ENCODE measurements at regions of chr12 and their contacts with region 1.

Region 1: GRCh38 chr12:120292661-120293531 is at the start of gene RNU4-1:
- DNase-seq: peak; percentile 54 to 94 (median 61)
- ATAC-seq: peak; percentile 76
- H3K4me3 ChIP-seq: peak within 1 kb of the TSS; percentile 44
- H3K27ac ChIP-seq: peak within 1 kb of the TSS; percentile 100
- H3K4me1 ChIP-seq: peaks cover 8 to 18% of the 10 kb centered on the region in 2 experiments; a peak in 4 of 5 replicates
- H3K27me3 ChIP-seq: no peaks in the 10 kb centered on the region
- CTCF ChIP-seq: no peak
- EP300 ChIP-seq: peak; percentile 62
- POLR2A ChIP-seq: peak; percentile 100
- RAD21 ChIP-seq: no peak
- polyA plus RNA-seq, gene RNU4-1: not detected

Region 2: GRCh38 chr12:120194534-120195395 is 98.1 kb before region 1 on chr12 and contains the start of gene GCN1:
- CTCF ChIA-PET with region 1: no interaction called
- POLR2A ChIA-PET with region 1: interaction called, 217 read pairs
- in situ Hi-C with region 1: no loop called
- intact Hi-C with region 1: no loop called
- DNase-seq: peak; percentile 85 to 88 (median 86)
- ATAC-seq: peak; percentile 79
- H3K4me3 ChIP-seq: peak within 1 kb of the TSS; percentile 98
- H3K27ac ChIP-seq: peak within 1 kb of the TSS; percentile 96
- H3K4me1 ChIP-seq: peaks cover 12 to 38% of the 10 kb centered on the region in 2 experiments; a peak in 4 of 5 replicates
- H3K27me3 ChIP-seq: no peaks in the 10 kb centered on the region
- CTCF ChIP-seq: no peak
- EP300 ChIP-seq: no peak
- POLR2A ChIP-seq: peak; percentile 77
- RAD21 ChIP-seq: no peak
- polyA plus RNA-seq, gene GCN1: 11.9 to 18.2 TPM

Region 3: DNA sequence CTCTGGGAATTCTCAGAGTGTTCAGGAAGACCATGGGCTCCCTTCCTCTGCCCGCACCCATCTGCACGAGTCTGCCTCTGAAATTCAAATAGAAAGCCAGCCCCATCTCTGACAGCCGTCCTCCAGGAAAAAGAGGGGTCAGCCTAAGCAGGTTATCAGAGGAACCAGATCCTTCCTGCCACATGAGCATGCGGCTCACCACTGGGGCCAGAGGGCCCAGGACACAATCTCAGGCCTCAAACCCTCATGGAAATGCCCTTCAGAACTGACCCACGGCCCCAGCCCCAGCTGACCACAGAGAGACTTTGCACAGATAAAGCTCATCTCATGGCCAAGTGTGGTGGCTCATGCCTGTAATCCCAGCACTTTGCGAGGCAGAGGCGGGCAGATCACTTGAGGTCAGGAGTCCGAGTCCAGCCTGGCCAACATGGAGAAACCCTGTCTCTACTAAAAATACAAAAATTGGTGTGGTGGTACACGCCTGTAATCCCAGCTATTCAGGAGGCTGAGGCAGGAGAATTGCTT is 50.6 kb before region 1 on chr12:
- CTCF ChIA-PET with region 1: no interaction called
- POLR2A ChIA-PET with region 1: interaction called, 98 read pairs
- in situ Hi-C with region 1: no loop called
- intact Hi-C with region 1: no loop called
- DNase-seq: peak; percentile 76 to 95 (median 86)
- ATAC-seq: peak; percentile 97
- H3K4me3 ChIP-seq: no peak overlapping the region
- H3K27ac ChIP-seq: no peak overlapping the region
- H3K4me1 ChIP-seq: peaks cover 30 to 31% of the 10 kb centered on the region in 2 experiments
- H3K27me3 ChIP-seq: no peaks in the 10 kb centered on the region
- CTCF ChIP-seq: no peak
- EP300 ChIP-seq: peak; percentile 85
- POLR2A ChIP-seq: no peak
- RAD21 ChIP-seq: peak in 1 of 2 experiments; percentile 37; a peak in 2 of 4 replicates

Region 4: GRCh38 chr12:120276734-120277133 is 16.2 kb before region 1 on chr12:
- CTCF ChIA-PET with region 1: no interaction called
- POLR2A ChIA-PET with region 1: interaction called, 102 read pairs
- in situ Hi-C with region 1: no loop called
- intact Hi-C with region 1: no loop called
- DNase-seq: no peak
- ATAC-seq: no peak
- H3K4me3 ChIP-seq: no peak overlapping the region
- H3K27ac ChIP-seq: no peak overlapping the region
- H3K4me1 ChIP-seq: peaks cover 0 to 16% of the 10 kb centered on the region in 2 experiments; a peak in 2 of 5 replicates
- H3K27me3 ChIP-seq: no peaks in the 10 kb centered on the region
- CTCF ChIP-seq: no peak
- EP300 ChIP-seq: no peak
- POLR2A ChIP-seq: no peak
- RAD21 ChIP-seq: no peak

Region 5: DNA sequence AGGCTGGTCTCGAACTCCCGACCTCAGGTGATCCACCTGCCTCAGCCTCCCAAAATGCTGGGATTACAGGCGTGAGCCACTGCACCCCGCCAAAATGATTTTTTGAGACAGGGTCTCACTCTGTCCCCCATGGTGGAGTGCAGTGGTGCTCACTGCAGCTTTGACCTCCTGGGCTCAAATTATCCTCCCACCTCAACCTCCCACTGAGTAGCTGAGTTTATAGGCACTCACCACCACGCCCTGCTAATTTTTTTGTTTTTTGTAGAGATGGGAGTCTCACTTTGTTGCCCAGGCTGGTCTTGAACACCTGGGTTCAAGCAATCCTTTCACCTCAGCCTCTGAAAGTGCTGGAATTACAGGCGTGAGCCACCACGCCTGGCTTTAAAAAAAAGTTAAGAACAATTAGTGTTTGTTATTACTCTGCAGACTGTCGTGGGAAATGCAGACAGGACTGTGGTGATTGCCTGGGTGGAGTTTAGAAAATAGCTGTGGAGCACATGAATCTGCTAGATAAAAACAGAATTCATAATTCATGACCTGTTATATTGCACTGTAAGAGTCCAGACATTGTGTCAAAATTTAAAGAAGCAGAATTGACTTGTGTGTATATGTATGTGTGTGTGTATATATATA is 135.8 kb after region 1 on chr12:
- CTCF ChIA-PET with region 1: no interaction called
- POLR2A ChIA-PET with region 1: interaction called, 18 read pairs
- in situ Hi-C with region 1: no loop called
- intact Hi-C with region 1: no loop called
- DNase-seq: no peak
- ATAC-seq: no peak
- H3K4me3 ChIP-seq: no peak overlapping the region
- H3K27ac ChIP-seq: no peak overlapping the region
- H3K4me1 ChIP-seq: peaks cover 0 to 5% of the 10 kb centered on the region in 2 experiments; a peak in 2 of 5 replicates
- H3K27me3 ChIP-seq: peaks cover 5 to 15% of the 10 kb centered on the region in 2 experiments; a peak in 3 of 5 replicates
- CTCF ChIP-seq: no peak
- EP300 ChIP-seq: no peak
- POLR2A ChIP-seq: no peak
- RAD21 ChIP-seq: no peak

Region 6: GRCh38 chr12:120495723-120496412 is 203.0 kb after region 1 on chr12 and contains the start of gene DYNLL1:
- CTCF ChIA-PET with region 1: no interaction called
- POLR2A ChIA-PET with region 1: interaction called, 11 read pairs
- in situ Hi-C with region 1: no loop called
- intact Hi-C with region 1: no loop called
- DNase-seq: peak; percentile 94 to 98 (median 96)
- ATAC-seq: peak; percentile 98
- H3K4me3 ChIP-seq: peak within 1 kb of the TSS; percentile 97
- H3K27ac ChIP-seq: peak within 1 kb of the TSS; percentile 86
- H3K4me1 ChIP-seq: peaks cover 2 to 15% of the 10 kb centered on the region in 2 experiments; a peak in 3 of 5 replicates
- H3K27me3 ChIP-seq: no peaks in the 10 kb centered on the region
- CTCF ChIP-seq: peak in 1 of 3 experiments; percentile 4; a peak in 1 of 6 replicates
- EP300 ChIP-seq: peak; percentile 17; the same call in 1 of the 2 replicates
- POLR2A ChIP-seq: peak; percentile 94
- RAD21 ChIP-seq: no peak
- polyA plus RNA-seq, gene DYNLL1: 921 to 1,112 TPM

Region 7: DNA sequence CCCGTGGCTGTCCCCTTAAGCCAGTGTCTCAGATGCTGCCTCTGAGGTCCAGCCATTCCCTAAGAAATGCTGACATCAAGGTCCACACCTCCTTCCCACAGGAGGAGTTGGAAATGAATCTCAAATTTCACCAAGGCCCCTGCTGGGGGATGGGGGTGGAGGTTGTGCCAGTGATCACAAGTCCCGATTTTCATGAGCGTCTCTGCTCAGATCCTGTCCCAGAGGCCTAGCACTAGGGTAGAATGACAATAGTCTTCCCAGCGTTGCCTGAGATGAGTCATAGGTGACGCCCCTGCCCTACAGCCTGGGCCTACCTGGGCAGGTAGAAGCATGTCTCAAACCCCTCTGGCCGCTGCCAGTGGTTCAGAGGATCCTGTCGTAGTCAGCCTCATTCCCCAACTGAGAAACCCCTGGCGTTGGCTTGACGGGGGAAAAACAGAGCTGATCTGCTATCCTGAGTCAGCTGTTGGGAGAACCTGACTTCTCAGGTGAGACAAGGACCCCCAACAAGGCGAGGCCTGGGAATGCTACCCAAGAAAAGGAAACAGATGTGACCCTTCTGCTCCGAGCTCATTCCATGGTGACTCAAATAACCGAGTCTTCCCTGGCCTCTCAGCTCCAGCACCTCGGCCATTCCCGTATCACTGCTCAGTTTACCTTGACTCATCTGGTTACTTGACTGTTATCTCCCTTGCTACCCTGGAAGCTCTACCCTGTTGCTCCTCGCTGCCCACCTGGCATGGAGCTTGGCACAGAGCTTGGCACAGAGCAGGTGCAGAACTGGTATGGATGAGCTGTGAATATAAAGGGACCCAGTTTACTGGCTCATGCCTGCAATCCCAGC is 633.1 kb after region 1 on chr12:
- CTCF ChIA-PET with region 1: no interaction called
- POLR2A ChIA-PET with region 1: no interaction called
- in situ Hi-C with region 1: no loop called
- intact Hi-C with region 1: no loop called
- DNase-seq: no peak
- ATAC-seq: no peak; the same call in 1 of the 3 replicates
- H3K4me3 ChIP-seq: no peak overlapping the region
- H3K27ac ChIP-seq: no peak overlapping the region
- H3K4me1 ChIP-seq: no peaks in the 10 kb centered on the region; a peak in 2 of 5 replicates
- H3K27me3 ChIP-seq: no peaks in the 10 kb centered on the region
- CTCF ChIP-seq: no peak
- EP300 ChIP-seq: no peak
- POLR2A ChIP-seq: no peak
- RAD21 ChIP-seq: no peak